ENCODE measurements at regions of chr4 and their contacts with region 1.

Region 1: DNA sequence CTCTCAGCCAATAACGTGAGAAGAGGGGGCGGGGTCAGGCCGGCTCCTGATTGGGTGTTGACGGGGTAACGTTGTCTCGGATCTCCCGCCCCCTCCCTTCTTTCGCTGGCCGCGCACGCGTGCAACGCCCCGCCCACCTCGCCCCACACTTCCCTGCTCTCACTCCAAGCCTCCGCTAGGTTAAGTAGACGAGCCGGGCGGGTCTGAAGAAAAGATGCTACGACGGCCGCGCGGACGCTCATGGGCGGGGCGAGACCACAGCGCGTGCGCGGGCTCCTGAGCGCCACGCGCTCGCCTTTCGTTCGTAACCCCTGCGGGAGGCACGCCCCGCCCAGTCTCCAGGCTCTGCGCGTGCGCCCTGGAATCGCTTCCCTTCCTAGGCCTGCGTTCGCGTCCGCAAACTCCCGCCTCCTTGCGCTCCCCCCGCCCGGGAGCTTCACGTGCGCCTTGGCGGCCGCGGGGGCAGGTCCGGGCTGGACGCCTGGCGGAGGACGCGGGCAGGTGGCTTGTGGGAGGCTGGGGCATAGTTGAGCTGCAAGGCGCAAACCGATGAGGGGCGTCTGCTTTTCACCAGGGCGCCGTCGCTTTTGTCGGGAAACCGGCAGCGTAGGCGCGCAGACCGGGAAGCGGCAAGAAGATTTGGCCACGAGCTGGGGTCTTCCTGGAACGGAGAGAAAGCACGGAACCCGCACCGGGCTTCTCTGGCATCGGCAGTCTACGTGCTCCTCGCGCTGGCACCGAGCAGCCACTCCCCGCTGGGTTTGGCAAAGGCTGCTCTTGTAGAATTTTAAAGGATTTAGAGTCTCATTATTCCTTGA is 467 bp upstream of the PGRMC2 start:
- DNase-seq: peak; percentile 100
- H3K4me3 ChIP-seq: peak overlapping the region; percentile 74
- H3K27ac ChIP-seq: peak overlapping the region; percentile 93
- H3K4me1 ChIP-seq: no peaks in the 10 kb centered on the region
- H3K27me3 ChIP-seq: no peaks in the 10 kb centered on the region
- CTCF ChIP-seq: no peak

Region 2: GRCh38 chr4:128060699-128061565 is 227.1 kb before region 1 on chr4 and contains the start of gene LARP1B:
- intact Hi-C with region 1: loop called (anchors 5 kb)
- DNase-seq: peak; percentile 97
- H3K4me3 ChIP-seq: peak within 1 kb of the TSS; percentile 87
- H3K27ac ChIP-seq: peak within 1 kb of the TSS; percentile 97
- H3K4me1 ChIP-seq: peaks cover 6% of the 10 kb centered on the region
- H3K27me3 ChIP-seq: no peaks in the 10 kb centered on the region
- CTCF ChIP-seq: no peak
- total RNA-seq, gene LARP1B: 28.8 to 29.5 TPM

Region 3: GRCh38 chr4:128191115-128191781 is 96.8 kb before region 1 on chr4:
- intact Hi-C with region 1: loop called (anchors 10 kb)
- DNase-seq: peak; percentile 65
- H3K4me3 ChIP-seq: no peak overlapping the region
- H3K27ac ChIP-seq: no peak overlapping the region
- H3K4me1 ChIP-seq: no peaks in the 10 kb centered on the region
- H3K27me3 ChIP-seq: no peaks in the 10 kb centered on the region
- CTCF ChIP-seq: peak; percentile 81

Region 4: GRCh38 chr4:128349921-128350320 is 61.8 kb after region 1 on chr4:
- intact Hi-C with region 1: no loop called
- DNase-seq: no peak
- H3K4me3 ChIP-seq: no peak overlapping the region
- H3K27ac ChIP-seq: no peak overlapping the region
- H3K4me1 ChIP-seq: no peaks in the 10 kb centered on the region
- H3K27me3 ChIP-seq: no peaks in the 10 kb centered on the region
- CTCF ChIP-seq: no peak

Region 5: DNA sequence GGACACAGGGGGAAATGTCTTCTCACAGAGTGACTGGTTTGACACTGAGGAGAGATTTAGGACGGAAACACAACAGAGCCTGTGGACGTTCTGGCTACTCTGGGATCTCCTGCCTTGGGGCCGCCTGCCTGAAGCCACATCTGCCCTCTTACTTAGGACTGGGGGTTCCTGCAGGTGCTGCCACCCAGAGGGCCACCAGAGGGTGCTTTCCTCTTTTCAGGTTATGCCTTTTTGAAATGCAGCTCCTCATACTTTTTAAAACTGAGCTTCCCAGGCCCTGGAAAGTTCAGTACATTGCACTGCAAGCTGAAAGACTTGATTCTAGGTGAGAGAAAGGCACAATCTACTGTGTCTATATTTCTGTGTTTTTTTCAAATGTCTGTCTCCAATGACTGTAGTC is 91.8 kb after region 1 on chr4:
- intact Hi-C with region 1: loop called (anchors 10 kb)
- DNase-seq: no peak
- H3K4me3 ChIP-seq: no peak overlapping the region
- H3K27ac ChIP-seq: no peak overlapping the region
- H3K4me1 ChIP-seq: no peaks in the 10 kb centered on the region
- H3K27me3 ChIP-seq: no peaks in the 10 kb centered on the region
- CTCF ChIP-seq: peak; percentile 39

Measured in colonic mucosa (tissue), 4 donors.